ENCODE measurements at regions of chr11 and their contacts with region 1.

Region 1: DNA sequence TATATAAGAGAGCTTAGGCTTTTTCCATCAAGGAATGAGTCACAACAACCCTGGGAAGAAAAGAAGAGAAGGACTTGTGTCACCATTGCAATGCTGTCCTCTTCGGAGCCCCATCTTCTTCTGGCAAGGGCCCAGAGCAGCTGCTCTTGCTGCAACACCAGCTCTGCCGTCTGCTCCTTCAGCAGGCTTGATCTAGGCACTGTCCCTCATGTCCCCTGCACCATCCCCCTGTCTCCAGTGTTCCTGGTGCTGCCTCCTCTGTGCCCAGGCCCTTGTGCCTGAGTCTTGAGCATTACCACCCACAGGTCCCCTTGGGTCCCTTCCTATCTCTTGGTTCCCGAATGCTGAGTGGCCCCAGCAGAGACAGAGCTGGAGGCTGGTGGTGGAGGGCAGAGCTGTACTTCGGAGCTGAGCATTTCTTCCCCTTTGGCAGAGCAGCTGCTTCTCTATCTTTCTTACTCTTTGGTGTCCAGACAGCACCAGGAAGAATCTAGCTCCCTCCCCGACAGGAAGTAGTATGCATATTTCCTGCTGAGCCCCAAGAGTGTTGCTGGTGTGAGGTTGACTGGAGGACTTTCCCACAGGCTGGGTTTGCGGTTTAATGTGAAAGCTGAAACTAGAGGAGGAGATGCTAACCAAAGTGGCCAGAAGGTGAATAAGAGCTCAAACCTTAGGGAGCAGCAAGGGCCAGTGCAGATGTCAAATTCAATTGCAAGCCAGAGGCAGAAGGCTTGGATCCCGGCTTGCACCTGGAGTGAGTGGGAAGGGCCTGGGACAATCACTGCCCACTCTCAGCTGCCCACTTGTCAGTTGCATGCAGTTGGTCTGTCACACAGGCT is 27.8 kb downstream of the WEE1 start:
- DNase-seq: peak; percentile 27
- H3K4me3 Mint-ChIP-seq: no peak overlapping the region
- H3K27ac Mint-ChIP-seq: no peak overlapping the region
- H3K4me1 Mint-ChIP-seq: peaks cover 9% of the 10 kb centered on the region
- H3K27me3 Mint-ChIP-seq: no peaks in the 10 kb centered on the region
- CTCF ChIP-seq: no peak

Region 2: DNA sequence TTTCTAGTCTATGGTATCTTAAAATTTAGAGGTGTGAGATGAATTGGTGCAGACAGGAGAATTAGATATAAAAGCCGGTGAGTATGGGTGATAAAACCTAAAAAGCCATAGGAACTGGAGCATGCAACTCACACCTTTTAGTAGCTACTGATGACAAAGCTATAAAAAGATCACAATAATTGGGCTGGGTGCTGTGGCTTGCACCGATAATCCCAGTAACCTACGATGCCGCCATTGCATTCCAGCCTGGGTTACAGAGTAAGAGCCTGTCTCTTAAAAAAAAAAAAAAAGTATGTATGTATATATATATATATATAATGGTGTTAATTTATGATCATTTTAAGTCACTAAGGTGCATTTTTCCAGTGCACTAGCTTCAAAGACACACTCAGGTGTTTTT is 10.5 kb before region 1 on chr11:
- CTCF ChIA-PET with region 1: interaction called, 8 read pairs
- POLR2A ChIA-PET with region 1: interaction called, 11 read pairs
- intact Hi-C with region 1: no loop called
- DNase-seq: no peak
- H3K4me3 Mint-ChIP-seq: no peak overlapping the region
- H3K27ac Mint-ChIP-seq: no peak overlapping the region
- H3K4me1 Mint-ChIP-seq: peaks cover 10% of the 10 kb centered on the region
- H3K27me3 Mint-ChIP-seq: no peaks in the 10 kb centered on the region
- CTCF ChIP-seq: no peak